Activated T-helper 1 cell treated with anti-CD3 and anti-CD28 coated beads, Interleukin-12 subunit alpha, Interleukin-12 subunit beta, Interleukin-2, Interleukin-4 antibody, amounts not matched to agents 30 ng/mL and 10 ng/mL and 1 ng/mL, durations not matched to agents 14 hours and 24 hours and 36 hours (primary cell): ENCODE measurements at regions of chr22 and their contacts with region 1.

Region 1: GRCh38 chr22:26502688-26503561 is 9.3 kb downstream of the TFIP11 start:
- DNase-seq: peak; percentile 65
- H3K4me3 Mint-ChIP-seq: peak overlapping the region; percentile 50
- H3K27ac Mint-ChIP-seq: peak overlapping the region; percentile 78
- H3K4me1 Mint-ChIP-seq: peaks cover 21% of the 10 kb centered on the region
- H3K27me3 Mint-ChIP-seq: no peaks in the 10 kb centered on the region

Region 2: DNA sequence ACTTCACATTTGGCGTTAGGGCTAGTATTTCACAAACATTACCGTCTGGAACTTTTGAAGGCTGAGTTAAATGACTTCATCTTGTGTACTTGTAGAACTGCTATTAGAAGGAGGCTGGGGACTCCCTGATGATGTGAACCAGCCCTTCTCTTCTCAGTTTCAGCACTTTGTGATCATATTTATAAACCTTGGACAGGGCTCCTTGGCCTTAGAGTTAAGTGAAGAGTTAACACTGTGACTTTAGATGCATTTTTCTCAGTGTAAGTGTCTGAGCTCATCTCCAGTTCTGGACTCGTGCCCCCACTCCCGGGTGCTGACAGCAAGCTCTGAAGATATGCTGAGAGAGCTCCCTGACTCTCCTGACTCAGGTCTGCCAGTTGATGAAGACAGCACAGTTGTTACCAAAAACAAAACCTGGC is 162.9 kb after region 1 on chr22:
- intact Hi-C with region 1: loop called (anchors 1 kb)
- DNase-seq: no peak
- H3K4me3 Mint-ChIP-seq: peak overlapping the region; percentile 75
- H3K27ac Mint-ChIP-seq: peak overlapping the region; percentile 96
- H3K4me1 Mint-ChIP-seq: peaks cover 76% of the 10 kb centered on the region
- H3K27me3 Mint-ChIP-seq: no peaks in the 10 kb centered on the region